Posterior vena cava (tissue), 2 donors: ENCODE measurements at regions of chr2 and their contacts with region 1.

Region 1: GRCh38 chr2:46377176-46377581 is 80.0 kb downstream of the EPAS1 start:
- DNase-seq: no peak

Region 2: DNA sequence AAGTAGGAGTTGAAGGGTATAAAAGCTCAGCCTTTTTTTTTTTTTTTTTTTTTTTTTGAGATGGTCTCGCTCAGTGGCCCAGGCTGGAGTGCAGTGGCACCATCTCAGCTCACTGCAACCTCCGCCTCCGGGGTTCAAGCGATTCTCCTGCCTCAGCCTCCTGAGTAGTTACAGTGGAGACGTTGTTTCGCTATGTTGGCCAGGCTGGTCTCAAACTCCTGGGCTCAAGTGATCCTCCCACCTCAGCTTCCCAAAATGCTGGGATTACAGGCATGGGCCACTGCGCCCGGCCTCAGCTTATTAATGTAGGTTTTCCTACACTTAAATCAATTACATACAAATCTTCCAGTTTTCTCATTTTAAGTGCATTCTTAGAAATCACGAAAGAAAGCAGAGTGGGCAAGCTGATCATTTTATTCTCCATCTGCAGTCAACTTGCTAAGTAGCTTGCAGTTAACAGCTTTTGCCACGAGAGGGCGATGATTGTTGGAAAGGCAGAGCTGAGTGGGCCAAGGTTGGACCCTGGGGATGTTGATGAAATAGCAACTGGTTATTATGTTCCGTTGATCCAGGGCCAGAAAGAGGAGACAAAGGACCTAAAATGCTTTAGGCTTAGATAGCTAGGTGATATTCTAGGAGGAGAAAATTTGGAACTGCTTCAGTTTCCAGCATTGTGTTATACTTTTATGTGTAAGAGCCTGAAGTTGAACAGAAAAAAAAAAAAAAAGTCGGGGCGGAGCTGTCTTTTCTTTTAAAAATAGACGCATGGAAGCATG is 314.4 kb before region 1 on chr2:
- intact Hi-C with region 1: loop called in 1 of 2 experiments (anchors 10 kb)
- DNase-seq: peak; percentile 90

Region 3: DNA sequence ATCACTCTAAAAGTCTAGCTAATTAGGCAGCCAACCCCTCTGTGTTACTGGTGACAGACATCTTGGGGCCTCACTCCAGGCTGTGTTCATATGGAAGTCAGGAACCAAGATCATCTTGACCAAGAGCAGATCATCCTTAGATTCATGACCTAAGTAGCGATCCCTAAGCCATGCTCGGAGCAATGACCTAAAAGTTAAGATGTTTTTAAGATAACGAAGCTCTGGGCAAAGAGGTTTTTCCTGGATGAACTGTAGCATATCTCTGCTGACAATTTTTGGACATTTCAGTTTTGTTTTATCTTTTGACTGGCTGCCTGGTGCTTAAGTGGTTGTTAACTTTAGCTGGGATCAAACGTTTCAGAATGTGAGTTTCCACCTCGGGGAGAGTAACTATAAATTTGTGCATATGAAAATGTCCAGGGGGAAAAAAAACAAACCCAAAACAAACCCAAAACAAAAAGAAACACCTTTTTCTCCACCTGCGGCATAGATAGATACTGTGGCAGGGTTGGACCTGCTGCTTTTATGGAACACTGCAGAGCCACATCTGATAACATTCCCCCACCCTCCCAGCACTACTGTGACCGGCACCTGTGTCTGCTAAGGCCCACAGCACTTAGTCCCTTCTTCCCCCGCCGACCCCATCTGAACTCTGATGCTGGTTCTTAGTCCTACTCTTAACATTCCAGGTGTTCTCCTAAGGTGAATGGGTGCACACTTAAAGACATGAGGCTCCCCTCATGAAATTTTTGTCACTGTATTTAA is 34.4 kb before region 1 on chr2:
- intact Hi-C with region 1: loop called in 1 of 2 experiments (anchors 1 kb)
- DNase-seq: no peak